ENCODE measurements at regions of chr17 and their contacts with region 1.

Region 1: GRCh38 chr17:32936894-32937500 is 9.0 kb downstream of the TMEM98 start:
- DNase-seq: peak; percentile 70
- ATAC-seq: peak; percentile 80
- H3K4me3 Mint-ChIP-seq: no peak overlapping the region
- H3K27ac Mint-ChIP-seq: no peak overlapping the region
- H3K4me1 Mint-ChIP-seq: peaks cover 3% of the 10 kb centered on the region
- H3K27me3 Mint-ChIP-seq: peaks cover 12% of the 10 kb centered on the region

Region 2: DNA sequence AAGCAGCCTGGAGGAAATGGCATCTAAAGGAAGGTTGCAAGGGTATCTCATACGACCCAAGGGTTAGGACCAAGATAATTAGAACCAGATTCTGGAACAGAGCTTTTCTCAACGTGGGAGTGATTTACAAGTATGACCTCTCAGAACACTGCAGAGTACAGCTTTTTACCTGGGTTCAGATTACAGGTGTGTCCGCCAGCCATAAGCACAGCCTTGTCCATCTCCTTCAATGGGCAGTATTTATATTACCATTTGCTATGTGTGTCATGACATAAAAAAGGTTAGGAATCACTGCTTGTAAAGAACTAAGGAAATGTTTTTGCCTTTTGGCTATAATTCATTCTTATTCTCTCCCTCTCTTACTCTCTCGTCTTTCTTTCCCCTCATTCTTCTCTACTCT is 96.8 kb before region 1 on chr17:
- CTCF ChIA-PET with region 1: no interaction called
- POLR2A ChIA-PET with region 1: no interaction called
- DNase-seq: no peak
- ATAC-seq: no peak
- H3K4me3 Mint-ChIP-seq: no peak overlapping the region
- H3K27ac Mint-ChIP-seq: no peak overlapping the region
- H3K4me1 Mint-ChIP-seq: no peaks in the 10 kb centered on the region
- H3K27me3 Mint-ChIP-seq: peaks cover 10% of the 10 kb centered on the region

Region 3: DNA sequence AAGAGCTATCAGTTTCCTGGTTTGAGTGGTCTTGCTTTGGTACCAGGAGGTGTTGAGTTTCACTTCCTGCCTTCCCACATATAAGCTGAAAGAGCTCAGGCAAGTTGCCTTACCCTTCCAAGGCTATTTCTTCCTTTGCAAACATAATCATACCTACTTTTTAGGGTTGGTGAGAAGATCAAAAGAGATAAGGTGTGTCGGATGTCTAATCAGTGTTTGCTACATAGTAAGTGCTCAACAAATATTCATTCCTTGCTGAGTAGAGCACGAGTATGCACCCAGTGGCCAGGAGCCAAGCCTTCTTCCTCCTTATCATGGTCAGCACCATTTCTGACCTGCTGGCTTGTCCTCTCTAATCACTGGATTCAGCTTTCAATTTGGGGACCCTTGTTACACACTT is 21.8 kb before region 1 on chr17:
- CTCF ChIA-PET with region 1: interaction called, 12 read pairs
- POLR2A ChIA-PET with region 1: no interaction called
- DNase-seq: no peak
- ATAC-seq: no peak
- H3K4me3 Mint-ChIP-seq: no peak overlapping the region
- H3K27ac Mint-ChIP-seq: no peak overlapping the region
- H3K4me1 Mint-ChIP-seq: peaks cover 37% of the 10 kb centered on the region
- H3K27me3 Mint-ChIP-seq: peaks cover 6% of the 10 kb centered on the region

Region 4: GRCh38 chr17:32962320-32962711 is 25.3 kb after region 1 on chr17:
- CTCF ChIA-PET with region 1: no interaction called
- POLR2A ChIA-PET with region 1: no interaction called
- DNase-seq: no peak
- ATAC-seq: no peak
- H3K4me3 Mint-ChIP-seq: no peak overlapping the region
- H3K27ac Mint-ChIP-seq: no peak overlapping the region
- H3K4me1 Mint-ChIP-seq: no peaks in the 10 kb centered on the region
- H3K27me3 Mint-ChIP-seq: peaks cover 17% of the 10 kb centered on the region